ENCODE measurements at regions of chr19 and their contacts with region 1.

Region 1: GRCh38 chr19:4870025-4870700 is 2.7 kb upstream of the PLIN3 start:
- DNase-seq: no peak

Region 2: GRCh38 chr19:4800591-4801355 is 69.4 kb before region 1 on chr19:
- CTCF ChIA-PET with region 1: no interaction called
- POLR2A ChIA-PET with region 1: no interaction called
- DNase-seq: no peak

Region 3: DNA sequence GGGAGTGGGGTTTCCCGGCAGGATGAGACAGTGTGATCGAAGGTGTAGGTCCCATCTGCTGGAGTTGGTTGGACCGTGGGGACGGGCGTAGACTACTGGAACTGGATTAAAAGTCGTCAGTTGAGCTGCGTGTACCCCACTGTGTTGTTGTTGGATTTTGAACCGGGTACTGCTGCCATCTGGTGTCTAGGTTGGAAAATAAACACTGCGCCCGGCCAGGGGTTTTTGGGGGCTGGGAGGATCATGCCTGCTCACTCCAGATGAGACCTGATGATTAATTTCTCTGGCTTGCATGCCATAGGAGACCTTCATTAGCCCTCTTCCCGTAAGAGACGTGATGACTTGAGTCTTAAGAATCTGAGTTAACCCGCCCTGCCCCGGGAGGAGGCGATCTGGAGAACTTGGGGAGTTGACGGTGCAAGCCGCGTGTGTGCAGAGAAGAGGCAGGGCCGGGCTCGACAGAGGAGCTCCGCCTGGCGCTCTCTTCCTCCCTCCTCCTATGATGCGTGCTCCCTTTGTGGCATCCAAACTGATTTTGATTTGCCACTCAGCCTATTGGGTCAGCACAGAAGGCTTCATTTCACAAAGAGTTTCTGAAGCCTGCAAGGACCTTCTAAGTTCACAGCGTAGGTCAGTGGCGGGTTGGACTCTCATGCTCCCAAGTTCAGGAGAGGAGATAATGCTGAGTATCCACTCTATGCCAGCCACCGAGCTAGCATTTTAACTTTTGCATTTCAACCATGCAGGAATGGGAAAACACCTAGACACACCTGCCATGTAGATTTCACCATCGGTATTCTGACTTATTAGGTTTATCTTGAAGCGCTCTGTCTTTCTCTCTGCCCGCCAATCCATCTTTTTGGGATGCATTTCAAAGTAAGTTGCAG is 41.9 kb after region 1 on chr19:
- CTCF ChIA-PET with region 1: interaction called, 30 read pairs
- POLR2A ChIA-PET with region 1: interaction called, 8 read pairs
- DNase-seq: peak; percentile 60

Measured in HEK293T (cell line).